ENCODE measurements at regions of chr12 and their contacts with region 1.

Region 1: DNA sequence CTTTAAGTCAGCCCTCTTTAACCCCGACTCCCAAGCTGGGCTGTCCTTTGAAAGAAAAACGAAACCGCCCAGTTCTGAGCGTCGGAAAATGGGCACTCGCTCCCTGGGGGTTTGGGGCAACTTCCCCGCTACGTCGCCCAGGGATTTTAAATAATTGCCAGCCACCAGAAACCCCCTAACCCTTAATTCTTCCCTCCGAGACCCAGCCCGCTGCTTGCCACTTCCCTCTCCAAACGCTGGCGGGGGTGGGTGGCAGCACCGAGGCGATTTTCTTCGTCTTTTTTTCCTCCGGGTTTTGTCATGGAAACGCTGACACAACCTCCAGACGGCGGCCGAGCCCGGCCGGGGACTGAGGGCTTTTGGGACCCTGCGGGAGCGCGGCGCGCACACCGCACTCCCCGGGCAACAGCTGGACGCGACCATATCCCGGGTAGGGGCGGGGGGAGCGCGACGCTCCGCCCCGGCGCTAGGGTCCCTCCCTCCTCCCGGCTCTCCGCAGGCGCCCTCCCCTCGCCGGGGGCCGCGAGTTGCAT is at the start of gene CHST11:
- DNase-seq: peak; percentile 74
- H3K4me3 Mint-ChIP-seq: peak within 1 kb of the TSS; percentile 98
- H3K27ac Mint-ChIP-seq: peak within 1 kb of the TSS; percentile 96
- H3K4me1 Mint-ChIP-seq: peaks cover 31% of the 10 kb centered on the region
- H3K27me3 Mint-ChIP-seq: no peaks in the 10 kb centered on the region
- total RNA-seq, gene CHST11: 41.0 and 50.6 TPM in 2 replicates

Region 2: GRCh38 chr12:104213952-104214351 is 242.5 kb before region 1 on chr12:
- intact Hi-C with region 1: no loop called
- DNase-seq: no peak
- H3K4me3 Mint-ChIP-seq: no peak overlapping the region
- H3K27ac Mint-ChIP-seq: no peak overlapping the region
- H3K4me1 Mint-ChIP-seq: peaks cover 18% of the 10 kb centered on the region
- H3K27me3 Mint-ChIP-seq: peaks cover 4% of the 10 kb centered on the region

Region 3: DNA sequence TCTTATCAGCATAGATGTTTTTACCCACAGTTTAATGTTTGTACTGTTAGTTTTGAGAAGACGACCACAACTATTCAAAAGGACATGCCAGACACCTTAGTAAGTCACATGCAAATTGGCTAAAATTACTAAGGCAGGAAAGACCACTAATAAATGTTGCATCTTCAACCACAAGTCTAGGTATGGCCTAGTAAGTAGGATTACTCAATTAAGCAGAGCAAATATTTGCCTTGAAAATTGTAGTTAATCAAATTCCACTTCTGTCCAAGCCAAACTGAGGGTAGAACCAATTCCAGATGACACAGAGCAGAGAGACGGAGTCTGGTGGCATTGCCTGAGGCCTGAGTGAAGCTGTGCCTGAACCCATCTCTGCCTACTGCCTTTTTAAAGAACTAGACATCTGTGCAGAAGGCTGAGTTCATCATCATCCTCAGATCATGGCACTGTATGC is 29.4 kb before region 1 on chr12:
- intact Hi-C with region 1: loop called (anchors 1 kb)
- DNase-seq: no peak
- H3K4me3 Mint-ChIP-seq: no peak overlapping the region
- H3K27ac Mint-ChIP-seq: peak overlapping the region; percentile 43
- H3K4me1 Mint-ChIP-seq: peaks cover 26% of the 10 kb centered on the region
- H3K27me3 Mint-ChIP-seq: no peaks in the 10 kb centered on the region

Region 4: GRCh38 chr12:104494137-104494792 is 37.8 kb after region 1 on chr12:
- intact Hi-C with region 1: loop called (anchors 2 kb)
- DNase-seq: no peak
- H3K4me3 Mint-ChIP-seq: peak overlapping the region; percentile 56
- H3K27ac Mint-ChIP-seq: peak overlapping the region; percentile 85
- H3K4me1 Mint-ChIP-seq: peaks cover 80% of the 10 kb centered on the region
- H3K27me3 Mint-ChIP-seq: no peaks in the 10 kb centered on the region

Region 5: DNA sequence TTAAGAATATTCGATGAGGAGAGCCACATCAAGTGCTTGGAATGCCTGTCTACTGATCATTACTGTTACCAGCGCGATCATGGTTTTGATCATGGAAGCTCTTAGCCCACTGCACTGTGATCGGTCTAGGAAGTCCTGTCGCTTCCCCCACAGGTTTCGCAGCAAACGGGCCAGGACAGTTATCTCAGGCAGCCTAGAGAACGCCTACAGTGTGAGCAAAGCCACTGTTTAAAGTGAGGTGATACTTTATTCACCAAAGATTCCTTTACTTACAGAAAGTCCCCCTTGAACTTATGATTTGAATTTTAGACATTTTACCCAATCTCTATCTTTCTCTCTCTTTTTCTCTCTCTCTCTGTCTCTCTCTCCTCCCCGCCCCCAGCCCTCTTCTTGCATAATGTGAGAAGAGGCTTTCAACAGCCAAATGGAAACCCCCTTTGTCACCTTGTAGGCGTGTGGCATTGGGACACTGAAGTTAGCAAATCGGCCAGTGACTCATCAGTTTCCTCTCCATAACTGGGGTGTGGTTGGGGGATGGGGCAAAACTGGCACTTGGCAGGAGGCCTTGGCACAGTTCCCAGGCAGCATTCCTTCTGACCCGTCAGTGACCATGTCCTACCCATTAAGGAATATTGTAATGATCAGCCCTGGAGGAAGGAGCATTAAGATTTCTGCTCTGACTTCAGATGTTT is 215.1 kb after region 1 on chr12:
- intact Hi-C with region 1: loop called (anchors 2 kb)
- DNase-seq: peak; percentile 54
- H3K4me3 Mint-ChIP-seq: peak overlapping the region; percentile 45
- H3K27ac Mint-ChIP-seq: peak overlapping the region; percentile 89
- H3K4me1 Mint-ChIP-seq: peaks cover 55% of the 10 kb centered on the region
- H3K27me3 Mint-ChIP-seq: no peaks in the 10 kb centered on the region